CD4-positive, alpha-beta T cell (primary cell): ENCODE measurements at regions of chr5 and their contacts with region 1.

Region 1: DNA sequence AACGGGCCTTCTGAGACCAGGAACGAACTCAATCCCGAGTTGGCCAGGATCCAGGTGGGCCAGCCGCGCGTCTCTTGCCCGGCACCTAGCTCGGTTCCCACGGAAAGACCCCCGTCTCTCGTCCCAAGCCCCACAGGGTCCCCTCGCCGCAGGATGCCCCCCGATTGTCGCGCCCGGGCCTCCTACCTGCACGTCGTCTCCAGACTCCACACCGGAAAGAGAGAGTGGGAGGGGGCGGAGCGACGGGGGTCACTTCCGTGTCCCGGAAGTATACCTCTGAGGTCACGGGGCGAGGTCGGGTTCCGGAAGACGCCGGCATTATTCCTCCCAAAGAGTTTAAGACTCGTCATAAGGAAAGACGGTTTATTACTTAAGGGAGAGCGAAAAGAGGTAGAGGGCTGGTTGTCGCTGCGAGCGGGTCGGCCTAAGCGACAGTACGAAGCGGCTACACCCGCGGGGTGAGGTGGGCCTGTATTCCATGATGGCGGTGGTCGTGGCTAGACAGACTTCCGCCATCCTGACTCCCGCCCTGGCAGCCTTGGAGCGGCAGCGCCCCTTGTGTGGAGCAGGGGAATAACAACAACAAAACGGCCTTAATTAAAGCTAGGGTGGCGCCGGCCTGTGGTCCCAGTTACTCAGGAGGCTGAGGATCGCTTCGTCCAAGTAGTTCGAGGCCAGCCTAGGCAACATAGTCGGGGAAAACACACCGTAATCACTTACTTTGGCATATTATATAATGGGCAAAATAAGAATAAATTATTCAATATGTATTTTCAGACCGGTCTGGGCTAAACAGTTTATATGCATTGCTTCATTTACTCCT is at the start of gene RPS14:
- DNase-seq: peak; percentile 89 to 97 (median 94)
- ATAC-seq: peak; percentile 88
- H3K4me3 ChIP-seq: peak within 1 kb of the TSS; percentile 86
- H3K4me3 Mint-ChIP-seq: peak within 1 kb of the TSS; percentile 96
- H3K27ac ChIP-seq: peak within 1 kb of the TSS; percentile 94 to 98
- H3K27ac Mint-ChIP-seq: peak within 1 kb of the TSS; percentile 98
- H3K4me1 ChIP-seq: peaks cover 36% of the 10 kb centered on the region
- H3K4me1 Mint-ChIP-seq: peaks cover 39% of the 10 kb centered on the region
- H3K27me3 ChIP-seq: no peaks in the 10 kb centered on the region
- H3K27me3 Mint-ChIP-seq: no peaks in the 10 kb centered on the region
- CTCF ChIP-seq: peak; percentile 94
- total RNA-seq, gene RPS14: 5,224 to 5,317 TPM

Region 2: GRCh38 chr5:149551200-149552037 is 898.3 kb before region 1 on chr5 and contains the start of gene CSNK1A1:
- CTCF ChIA-PET with region 1: no interaction called
- POLR2A ChIA-PET with region 1: no interaction called
- intact Hi-C with region 1: no loop called
- DNase-seq: peak; percentile 97 to 100 (median 99)
- ATAC-seq: peak; percentile 86
- H3K4me3 ChIP-seq: peak within 1 kb of the TSS; percentile 97
- H3K4me3 Mint-ChIP-seq: peak within 1 kb of the TSS; percentile 99
- H3K27ac ChIP-seq: peak within 1 kb of the TSS; percentile 94 to 98
- H3K27ac Mint-ChIP-seq: peak within 1 kb of the TSS; percentile 98
- H3K4me1 ChIP-seq: peaks cover 26% of the 10 kb centered on the region
- H3K4me1 Mint-ChIP-seq: peaks cover 36% of the 10 kb centered on the region
- H3K27me3 ChIP-seq: no peaks in the 10 kb centered on the region
- H3K27me3 Mint-ChIP-seq: no peaks in the 10 kb centered on the region
- CTCF ChIP-seq: peak; percentile 67
- total RNA-seq, gene CSNK1A1: 201 to 217 TPM

Region 3: DNA sequence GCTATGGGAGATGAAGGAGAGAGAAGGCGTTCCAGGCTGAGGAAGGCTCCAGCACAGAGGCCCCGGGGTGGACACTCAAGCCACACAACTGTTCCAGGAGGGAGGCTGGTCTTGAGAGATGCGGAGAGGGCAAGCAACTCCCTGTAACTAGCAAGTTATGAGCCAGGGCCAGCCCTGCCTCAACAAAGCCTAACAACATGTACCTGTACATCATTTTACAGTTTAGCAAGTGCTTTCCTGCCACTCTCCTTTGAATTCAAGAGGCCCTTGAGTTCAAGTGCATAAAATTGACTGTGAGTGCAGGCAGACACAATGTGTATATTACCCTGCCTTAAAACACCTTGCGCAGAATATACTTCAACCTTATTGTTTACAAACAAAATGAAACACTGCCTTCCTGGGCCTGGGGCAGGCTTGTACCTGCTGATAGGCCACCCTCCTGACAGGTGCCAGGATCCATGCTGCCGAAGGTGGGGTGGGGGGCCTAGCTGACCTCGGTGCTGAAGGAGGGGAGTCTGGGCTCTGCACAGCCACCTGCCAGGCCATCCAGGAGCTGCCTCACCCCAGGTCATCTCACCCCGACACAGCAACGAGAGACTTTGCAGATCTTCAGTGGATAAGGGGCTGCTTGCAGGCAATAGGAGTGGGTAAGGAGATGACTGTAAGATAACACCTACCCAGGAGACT is 639.7 kb before region 1 on chr5:
- CTCF ChIA-PET with region 1: no interaction called
- POLR2A ChIA-PET with region 1: no interaction called
- intact Hi-C with region 1: no loop called
- DNase-seq: no peak
- ATAC-seq: no peak
- H3K4me3 ChIP-seq: no peak overlapping the region
- H3K4me3 Mint-ChIP-seq: no peak overlapping the region
- H3K27ac ChIP-seq: no peak overlapping the region
- H3K27ac Mint-ChIP-seq: no peak overlapping the region
- H3K4me1 ChIP-seq: no peaks in the 10 kb centered on the region
- H3K4me1 Mint-ChIP-seq: no peaks in the 10 kb centered on the region
- H3K27me3 ChIP-seq: no peaks in the 10 kb centered on the region
- H3K27me3 Mint-ChIP-seq: no peaks in the 10 kb centered on the region
- CTCF ChIP-seq: no peak

Region 4: DNA sequence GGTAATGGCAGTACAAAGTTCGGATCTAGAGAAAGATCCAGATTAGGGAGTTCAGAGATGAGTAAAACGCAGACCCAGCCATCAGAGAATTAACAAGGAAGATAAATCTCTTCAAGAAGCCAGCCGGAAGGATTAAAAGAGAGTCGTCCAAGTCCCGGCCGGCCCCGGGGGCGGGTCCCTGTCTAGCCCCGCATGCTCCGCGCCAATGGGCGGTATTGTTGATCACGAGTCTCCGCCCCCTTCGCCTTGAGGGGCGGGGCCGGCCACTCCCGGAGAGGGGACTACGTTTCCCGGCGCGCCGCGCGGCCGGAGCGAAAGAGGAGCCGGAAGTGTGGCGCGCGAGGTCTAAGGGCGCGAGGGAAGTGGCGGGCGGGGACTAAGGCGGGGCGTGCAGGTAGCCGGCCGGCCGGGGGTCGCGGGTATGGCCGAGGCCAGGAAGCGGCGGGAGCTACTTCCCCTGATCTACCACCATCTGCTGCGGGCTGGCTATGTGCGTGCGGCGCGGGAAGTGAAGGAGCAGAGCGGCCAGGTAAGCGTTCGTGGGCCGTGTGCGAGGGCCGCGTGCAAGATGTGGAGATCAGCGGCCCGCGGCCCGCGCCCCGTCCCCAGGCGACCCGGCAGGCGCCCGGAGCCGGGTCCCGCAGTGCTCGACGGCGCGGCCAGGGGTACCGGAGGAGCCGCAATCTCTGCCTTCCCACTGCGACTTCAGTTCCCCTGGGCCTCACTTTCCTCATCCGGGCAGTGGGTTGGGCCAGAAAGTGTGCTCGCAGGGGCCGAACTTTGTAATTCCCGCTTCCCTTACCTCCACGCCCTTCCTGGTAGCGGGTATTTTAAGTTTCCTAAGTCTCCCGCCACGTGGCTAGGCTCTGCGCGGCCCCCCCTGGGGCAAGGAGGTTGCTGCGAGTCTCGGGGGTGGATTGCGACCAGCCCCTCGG is 92.1 kb before region 1 on chr5 and contains the start of gene TCOF1:
- CTCF ChIA-PET with region 1: interaction called, 5 read pairs
- POLR2A ChIA-PET with region 1: interaction called, 9 read pairs
- intact Hi-C with region 1: loop called in 1 of 2 experiments (anchors 1 kb)
- DNase-seq: peak; percentile 93 to 98 (median 97)
- ATAC-seq: peak; percentile 98
- H3K4me3 ChIP-seq: peak within 1 kb of the TSS; percentile 86
- H3K4me3 Mint-ChIP-seq: peak within 1 kb of the TSS; percentile 89
- H3K27ac ChIP-seq: peak within 1 kb of the TSS in 1 of 2 donors; percentile 46
- H3K27ac Mint-ChIP-seq: peak within 1 kb of the TSS; percentile 73
- H3K4me1 ChIP-seq: peaks cover 28% of the 10 kb centered on the region
- H3K4me1 Mint-ChIP-seq: peaks cover 47% of the 10 kb centered on the region
- H3K27me3 ChIP-seq: no peaks in the 10 kb centered on the region
- H3K27me3 Mint-ChIP-seq: no peaks in the 10 kb centered on the region
- CTCF ChIP-seq: no peak
- total RNA-seq, gene TCOF1: 40.4 to 43.2 TPM

Region 5: DNA sequence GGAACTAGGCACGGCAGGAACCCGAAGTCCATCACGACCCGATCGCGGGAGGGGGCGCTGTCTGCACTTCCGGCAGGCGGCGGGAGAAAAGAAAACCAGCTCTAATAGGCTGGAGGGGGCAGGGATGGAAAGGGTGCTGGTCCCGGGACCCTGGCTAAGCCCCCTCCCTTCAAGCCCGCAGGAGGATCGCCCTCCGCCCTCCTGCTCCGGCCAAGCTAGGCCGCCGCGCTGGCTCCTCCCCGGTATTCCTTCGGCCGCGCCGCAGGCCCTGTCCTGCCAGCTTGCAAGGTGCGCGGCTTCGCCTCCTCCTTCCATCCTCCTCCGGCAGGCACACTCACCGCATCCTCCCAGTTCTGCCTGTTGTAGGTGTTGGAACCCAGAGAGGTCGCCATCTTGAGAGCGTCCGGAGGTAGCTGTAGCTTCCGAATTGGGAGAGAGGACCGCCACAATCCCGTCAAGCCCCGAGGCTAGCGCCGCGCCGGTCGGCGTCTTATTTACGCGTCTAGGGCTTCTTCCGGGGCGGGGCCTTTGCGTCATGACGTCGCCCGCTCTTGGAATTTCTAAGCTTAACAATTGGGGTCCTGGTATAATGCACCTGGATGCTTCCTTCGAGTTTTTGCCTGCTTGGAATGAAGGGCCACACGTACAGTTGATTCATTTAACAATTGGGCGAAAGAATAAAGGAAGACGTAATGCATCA is 251.0 kb after region 1 on chr5 and contains the start of gene RBM22:
- CTCF ChIA-PET with region 1: interaction called, 14 read pairs
- POLR2A ChIA-PET with region 1: interaction called, 55 read pairs
- intact Hi-C with region 1: no loop called
- DNase-seq: peak; percentile 84 to 96 (median 90)
- ATAC-seq: peak; percentile 89
- H3K4me3 ChIP-seq: peak within 1 kb of the TSS; percentile 83
- H3K4me3 Mint-ChIP-seq: no peak within 1 kb of the TSS
- H3K27ac ChIP-seq: peak within 1 kb of the TSS; percentile 95 to 98
- H3K27ac Mint-ChIP-seq: no peak within 1 kb of the TSS
- H3K4me1 ChIP-seq: peaks cover 6% of the 10 kb centered on the region
- H3K4me1 Mint-ChIP-seq: no peaks in the 10 kb centered on the region
- H3K27me3 ChIP-seq: no peaks in the 10 kb centered on the region
- H3K27me3 Mint-ChIP-seq: no peaks in the 10 kb centered on the region
- CTCF ChIP-seq: peak; percentile 75
- total RNA-seq, gene RBM22: 98.2 to 101 TPM

Region 6: DNA sequence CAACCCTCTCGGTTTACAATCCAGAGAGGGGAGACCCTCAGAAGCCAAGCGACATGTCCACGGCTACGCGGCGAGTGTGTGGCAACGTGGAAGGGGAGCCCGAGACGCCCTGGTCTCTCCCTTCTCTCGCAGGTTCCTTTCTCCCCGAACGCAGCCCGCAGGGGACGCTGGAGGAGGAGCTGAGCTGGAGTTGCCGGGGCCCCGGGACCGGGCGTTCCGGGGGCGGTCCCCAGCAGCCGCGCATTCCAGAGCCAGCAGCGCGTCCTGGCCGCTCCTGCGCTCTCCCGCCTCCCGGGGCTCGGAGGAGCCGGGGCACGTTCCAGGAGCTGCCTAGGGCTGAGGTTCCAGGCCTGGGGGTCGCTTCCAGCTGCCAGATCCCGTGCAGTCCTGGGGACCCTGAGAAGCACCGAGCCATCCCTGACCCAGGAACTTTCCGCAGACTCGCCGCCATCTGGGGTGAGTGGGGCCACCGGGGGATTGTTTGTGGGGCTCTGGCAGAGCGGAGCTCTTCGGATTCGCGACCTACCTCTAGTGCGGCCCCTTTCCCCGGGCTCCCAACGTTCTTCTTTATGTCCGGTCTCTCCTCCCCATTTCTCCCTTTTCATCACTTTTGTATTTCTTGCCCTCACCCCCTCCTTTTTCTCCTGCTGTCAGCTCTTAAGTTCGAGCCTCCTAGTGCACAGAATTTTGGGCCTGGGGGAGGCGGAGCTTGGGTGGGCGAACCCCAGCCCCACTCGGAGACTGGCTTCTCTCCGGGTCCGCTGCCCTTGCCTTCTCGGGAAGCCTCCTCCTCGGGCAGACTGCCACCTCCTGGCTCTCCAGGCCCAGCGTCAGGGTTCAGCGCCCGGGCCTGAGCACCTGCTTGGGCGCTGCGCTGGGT is 329.0 kb after region 1 on chr5 and contains the start of gene SMIM3:
- CTCF ChIA-PET with region 1: interaction called, 6 read pairs
- POLR2A ChIA-PET with region 1: interaction called, 7 read pairs
- intact Hi-C with region 1: loop called in 1 of 2 experiments (anchors 10 kb)
- DNase-seq: peak; percentile 53 to 84 (median 68)
- ATAC-seq: peak; percentile 63
- H3K4me3 ChIP-seq: peak within 1 kb of the TSS; percentile 96
- H3K4me3 Mint-ChIP-seq: peak within 1 kb of the TSS; percentile 99
- H3K27ac ChIP-seq: peak within 1 kb of the TSS; percentile 62 to 70
- H3K27ac Mint-ChIP-seq: peak within 1 kb of the TSS; percentile 90
- H3K4me1 ChIP-seq: peaks cover 56% of the 10 kb centered on the region
- H3K4me1 Mint-ChIP-seq: peaks cover 58% of the 10 kb centered on the region
- H3K27me3 ChIP-seq: no peaks in the 10 kb centered on the region
- H3K27me3 Mint-ChIP-seq: no peaks in the 10 kb centered on the region
- CTCF ChIP-seq: peak; percentile 41
- total RNA-seq, gene SMIM3: 2.9 TPM